Posterior vena cava (tissue), 2 donors: ENCODE measurements at regions of chr5 and their contacts with region 1.

Region 1: GRCh38 chr5:19058216-19058615 is 929.8 kb downstream of the CDH18 start:
- DNase-seq: no peak

Region 2: GRCh38 chr5:19018822-19019221 is 39.4 kb before region 1 on chr5:
- intact Hi-C with region 1: loop called in 1 of 2 experiments (anchors 2 kb)
- DNase-seq: no peak